ENCODE measurements at regions of chr6 and their contacts with region 1.

Region 1: DNA sequence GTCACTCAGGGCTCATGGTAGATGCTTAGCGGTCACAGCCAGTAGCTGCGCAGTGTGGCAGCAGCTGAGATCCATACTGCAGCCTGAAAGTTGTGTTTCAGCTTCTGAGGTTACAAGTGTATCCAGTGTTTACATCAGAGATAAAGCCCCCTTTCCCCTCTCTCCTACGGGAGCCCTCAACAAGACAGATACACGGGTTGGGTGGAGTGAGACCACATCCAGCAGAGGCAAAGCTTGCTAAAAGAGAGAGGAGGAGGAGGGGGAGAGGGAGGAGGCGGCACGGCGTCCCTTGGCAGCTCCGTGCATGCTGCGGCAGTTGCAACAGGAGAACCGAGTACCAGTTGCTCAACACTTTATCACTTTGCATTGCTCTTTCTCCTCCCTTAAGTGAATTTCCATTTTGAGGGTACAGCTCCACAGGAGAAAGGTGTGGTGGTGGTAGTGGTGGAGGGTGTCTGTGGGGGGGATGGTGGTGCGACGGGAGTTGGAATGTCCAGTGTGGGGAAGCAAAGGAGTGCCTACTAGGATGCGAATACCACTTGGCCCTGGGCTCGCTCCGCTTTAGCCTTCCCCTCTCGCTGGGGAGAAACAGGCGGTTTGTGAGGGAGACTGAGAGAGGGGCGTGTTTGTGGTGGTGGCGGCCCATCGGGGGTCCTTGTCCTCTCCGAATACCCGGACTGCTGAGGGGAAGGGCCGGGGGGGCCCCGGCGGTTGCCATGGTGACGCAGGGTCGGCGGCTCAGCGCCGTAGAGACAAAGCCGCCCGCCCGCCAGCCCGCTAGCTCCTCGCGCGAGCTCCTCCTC is 405 bp upstream of the RNF182 start:
- DNase-seq: peak in 5 of 7 donors; percentile 7 to 38 (median 23)
- H3K4me3 ChIP-seq: peak overlapping the region in 1 of 4 donors; percentile 51
- H3K27ac ChIP-seq: no peak overlapping the region
- H3K4me1 ChIP-seq: no peaks in the 10 kb centered on the region
- H3K27me3 ChIP-seq: peaks cover 51% of the 10 kb centered on the region
- CTCF ChIP-seq: no peak
- POLR2A ChIP-seq: no peak

Region 2: DNA sequence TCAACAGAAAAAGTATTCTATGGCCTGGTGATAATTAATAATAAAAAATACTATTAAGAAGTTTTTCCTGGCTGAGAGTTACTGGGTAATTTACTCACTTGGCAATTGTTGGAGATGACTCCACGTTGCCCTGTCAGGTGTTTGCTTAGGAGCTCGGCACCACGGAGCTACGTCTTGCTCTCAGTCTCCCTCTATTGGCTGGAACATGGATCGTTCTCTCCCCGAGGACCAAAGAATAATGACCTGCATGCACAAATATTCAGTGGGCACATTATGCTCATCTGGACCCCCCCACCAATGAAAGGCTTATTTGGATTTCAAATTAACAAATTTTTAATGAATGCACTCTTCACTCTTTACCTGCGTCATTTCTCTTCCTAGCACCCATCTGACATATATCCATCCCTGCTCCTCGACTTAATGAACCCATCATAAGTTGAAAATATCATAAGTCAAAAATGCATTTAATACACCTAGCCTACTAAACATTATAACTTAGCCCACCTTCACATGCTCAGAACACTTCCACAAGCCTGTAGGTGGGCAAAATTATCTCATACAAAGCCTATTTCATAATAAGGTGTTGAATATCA is 122.2 kb after region 1 on chr6:
- intact Hi-C with region 1: loop called in 1 of 2 experiments (anchors 10 kb)
- DNase-seq: peak in 5 of 7 donors; percentile 33 to 61 (median 46)
- H3K4me3 ChIP-seq: no peak overlapping the region
- H3K27ac ChIP-seq: no peak overlapping the region
- H3K4me1 ChIP-seq: no peaks in the 10 kb centered on the region
- H3K27me3 ChIP-seq: peaks cover 40% of the 10 kb centered on the region
- CTCF ChIP-seq: peak; percentile 15 to 57 (median 49)
- POLR2A ChIP-seq: no peak

Region 3: DNA sequence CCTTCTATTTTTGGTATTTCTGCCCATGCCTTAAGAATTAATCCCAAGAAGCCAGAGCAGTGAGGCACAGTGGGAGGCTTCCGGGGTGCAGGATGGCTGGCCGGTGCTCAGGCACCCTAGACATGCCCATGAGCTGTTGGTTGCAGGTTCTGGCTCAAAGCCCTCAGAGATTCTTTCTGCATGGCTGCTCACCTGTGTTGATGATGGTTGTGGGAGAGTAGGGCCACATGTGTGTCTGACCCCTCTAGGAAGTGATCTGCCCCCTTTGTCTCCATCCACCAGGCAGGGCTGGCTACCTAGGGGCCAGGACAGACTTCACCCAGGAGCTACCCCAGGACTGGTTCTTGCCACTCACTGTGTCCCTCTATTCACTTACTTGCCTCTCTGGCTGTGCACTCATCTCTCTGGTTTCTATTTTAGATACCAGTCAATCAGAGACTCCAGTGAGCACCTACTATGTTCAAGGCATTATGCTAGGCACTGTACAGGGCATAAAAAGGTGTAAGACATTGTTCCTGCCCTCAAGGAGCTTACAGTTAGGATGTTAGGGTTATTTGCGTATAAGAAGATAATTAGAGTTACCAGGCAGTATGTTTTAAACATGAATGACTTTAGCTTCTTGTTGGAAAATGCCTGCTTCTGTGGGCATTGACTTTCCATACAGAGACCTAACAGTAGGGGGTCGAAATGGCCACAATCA is 210.0 kb after region 1 on chr6:
- intact Hi-C with region 1: no loop called
- DNase-seq: no peak
- H3K4me3 ChIP-seq: no peak overlapping the region
- H3K27ac ChIP-seq: no peak overlapping the region
- H3K4me1 ChIP-seq: peaks cover 0 to 7% of the 10 kb centered on the region in 2 donors
- H3K27me3 ChIP-seq: no peaks in the 10 kb centered on the region
- CTCF ChIP-seq: no peak
- POLR2A ChIP-seq: no peak